OCI-LY7 (cell line): ENCODE measurements at regions of chr4 and their contacts with region 1.

Region 1: GRCh38 chr4:37847311-37847884 is 20.9 kb downstream of the PGM2 start:
- DNase-seq: no peak
- H3K4me3 ChIP-seq: peak overlapping the region; percentile 36
- H3K27ac ChIP-seq: peak overlapping the region; percentile 93
- H3K4me1 ChIP-seq: peaks cover 76% of the 10 kb centered on the region
- CTCF ChIP-seq: no peak

Region 2: DNA sequence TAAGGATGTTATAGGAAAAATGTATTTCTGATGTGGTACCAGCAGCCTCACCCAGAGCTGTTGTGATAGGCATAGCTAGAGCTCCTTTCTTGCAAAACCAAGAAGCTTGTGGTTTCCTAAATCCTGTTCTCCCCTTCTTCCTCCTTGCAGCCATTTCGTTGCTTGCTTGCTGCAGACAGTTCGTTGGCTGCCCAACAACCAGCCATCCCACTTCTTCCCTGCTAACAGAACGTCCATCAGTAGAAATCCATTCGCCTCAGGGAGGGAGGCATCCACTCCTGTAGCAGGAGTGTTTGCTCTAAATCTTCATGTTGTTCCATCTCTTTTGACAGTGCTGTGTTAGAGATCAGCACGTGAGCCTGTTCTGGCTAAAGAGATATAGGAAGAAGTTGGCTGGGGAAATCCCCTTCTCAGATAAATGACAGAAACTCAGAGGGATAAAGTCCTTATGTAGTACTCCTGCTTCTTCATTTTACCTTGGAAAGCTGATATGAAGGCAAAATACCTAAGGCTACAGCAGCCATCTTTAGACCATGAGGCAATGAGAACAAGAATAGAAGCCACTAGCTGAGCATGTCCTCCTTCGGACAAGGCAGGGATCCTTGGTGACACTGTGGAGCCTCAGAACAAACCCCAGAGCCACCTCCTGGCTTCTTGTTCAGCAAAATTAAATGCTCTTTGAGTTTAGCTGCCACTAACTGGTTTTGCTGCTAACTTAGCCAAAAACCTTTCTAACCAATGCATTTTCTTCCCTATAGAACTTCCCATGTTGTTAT is 92.8 kb before region 1 on chr4:
- CTCF ChIA-PET with region 1: no interaction called
- POLR2A ChIA-PET with region 1: no interaction called
- intact Hi-C with region 1: no loop called
- DNase-seq: no peak
- H3K4me3 ChIP-seq: no peak overlapping the region
- H3K27ac ChIP-seq: no peak overlapping the region
- H3K4me1 ChIP-seq: peaks cover 14% of the 10 kb centered on the region
- CTCF ChIP-seq: no peak

Region 3: GRCh38 chr4:37826295-37827029 is 20.9 kb before region 1 on chr4 and contains the start of gene PGM2:
- CTCF ChIA-PET with region 1: no interaction called
- POLR2A ChIA-PET with region 1: interaction called, 32 read pairs
- intact Hi-C with region 1: loop called (anchors 1 kb)
- DNase-seq: peak; percentile 92
- H3K4me3 ChIP-seq: peak within 1 kb of the TSS; percentile 91
- H3K27ac ChIP-seq: peak within 1 kb of the TSS; percentile 60
- H3K4me1 ChIP-seq: peaks cover 30% of the 10 kb centered on the region
- CTCF ChIP-seq: 0 out of 2 replicates have a peak, but pooled peaks have one; percentile 21
- total RNA-seq, gene PGM2: 52.7 and 67.4 TPM in 2 replicates

Region 4: DNA sequence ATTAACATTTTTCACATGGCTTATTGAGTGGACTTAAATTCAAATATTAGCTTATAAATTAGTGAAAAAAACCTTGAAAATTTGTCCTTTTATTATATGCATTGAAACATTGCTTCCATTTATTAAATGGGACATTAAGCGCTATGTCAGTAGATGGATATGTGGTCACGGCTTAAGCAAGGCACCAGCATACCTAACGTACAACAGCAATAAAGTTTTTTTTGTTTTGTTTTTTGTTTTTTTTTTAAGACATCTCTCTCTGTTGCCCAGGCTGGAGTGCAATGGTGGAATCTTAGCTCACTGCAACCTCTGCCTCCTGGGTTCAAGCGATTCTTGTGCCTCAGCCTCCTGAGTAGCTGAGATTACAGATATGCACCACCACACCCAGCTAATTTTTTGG is 10.7 kb after region 1 on chr4:
- CTCF ChIA-PET with region 1: interaction called, 3 read pairs
- POLR2A ChIA-PET with region 1: interaction called, 21 read pairs
- intact Hi-C with region 1: no loop called
- DNase-seq: no peak
- H3K4me3 ChIP-seq: no peak overlapping the region
- H3K27ac ChIP-seq: no peak overlapping the region
- H3K4me1 ChIP-seq: peaks cover 9% of the 10 kb centered on the region
- CTCF ChIP-seq: no peak

Region 5: DNA sequence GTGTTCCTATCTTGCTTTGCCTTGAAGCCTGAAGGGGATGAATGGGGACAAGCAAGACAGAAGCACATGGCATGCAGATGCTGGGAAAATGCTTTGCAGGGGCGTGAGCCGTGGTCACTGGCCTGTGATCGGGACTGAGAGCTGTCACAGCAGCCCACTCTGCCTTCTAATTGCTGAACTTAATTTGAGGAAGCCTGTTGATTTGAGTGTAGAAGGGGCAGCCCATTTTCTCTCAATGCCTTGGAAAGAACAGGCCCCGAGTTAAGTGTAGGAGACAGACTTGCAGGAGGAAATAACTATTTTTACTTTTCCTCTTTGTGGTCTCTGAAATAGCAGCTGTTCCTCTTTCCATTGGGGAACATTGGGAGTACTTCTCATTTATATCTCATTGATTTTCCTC is 17.4 kb after region 1 on chr4:
- CTCF ChIA-PET with region 1: interaction called, 3 read pairs
- POLR2A ChIA-PET with region 1: interaction called, 10 read pairs
- intact Hi-C with region 1: no loop called
- DNase-seq: no peak
- H3K4me3 ChIP-seq: no peak overlapping the region
- H3K27ac ChIP-seq: no peak overlapping the region
- H3K4me1 ChIP-seq: no peaks in the 10 kb centered on the region
- CTCF ChIP-seq: no peak

Region 6: GRCh38 chr4:37873386-37873785 is 26.0 kb after region 1 on chr4:
- CTCF ChIA-PET with region 1: no interaction called
- POLR2A ChIA-PET with region 1: interaction called, 13 read pairs
- intact Hi-C with region 1: no loop called
- DNase-seq: no peak
- H3K4me3 ChIP-seq: no peak overlapping the region
- H3K27ac ChIP-seq: no peak overlapping the region
- H3K4me1 ChIP-seq: no peaks in the 10 kb centered on the region
- CTCF ChIP-seq: no peak